ENCODE measurements at regions of chr1 and their contacts with region 1.

Region 1: GRCh38 chr1:237562242-237562823 is 328.4 kb downstream of the ZP4 start:
- DNase-seq: peak; percentile 39
- H3K4me3 ChIP-seq: no peak overlapping the region
- H3K27ac ChIP-seq: no peak overlapping the region
- H3K4me1 ChIP-seq: no peaks in the 10 kb centered on the region
- H3K27me3 ChIP-seq: no peaks in the 10 kb centered on the region
- CTCF ChIP-seq: peak; percentile 76
- EP300 ChIP-seq: no peak
- RAD21 ChIP-seq: peak; percentile 73

Region 2: DNA sequence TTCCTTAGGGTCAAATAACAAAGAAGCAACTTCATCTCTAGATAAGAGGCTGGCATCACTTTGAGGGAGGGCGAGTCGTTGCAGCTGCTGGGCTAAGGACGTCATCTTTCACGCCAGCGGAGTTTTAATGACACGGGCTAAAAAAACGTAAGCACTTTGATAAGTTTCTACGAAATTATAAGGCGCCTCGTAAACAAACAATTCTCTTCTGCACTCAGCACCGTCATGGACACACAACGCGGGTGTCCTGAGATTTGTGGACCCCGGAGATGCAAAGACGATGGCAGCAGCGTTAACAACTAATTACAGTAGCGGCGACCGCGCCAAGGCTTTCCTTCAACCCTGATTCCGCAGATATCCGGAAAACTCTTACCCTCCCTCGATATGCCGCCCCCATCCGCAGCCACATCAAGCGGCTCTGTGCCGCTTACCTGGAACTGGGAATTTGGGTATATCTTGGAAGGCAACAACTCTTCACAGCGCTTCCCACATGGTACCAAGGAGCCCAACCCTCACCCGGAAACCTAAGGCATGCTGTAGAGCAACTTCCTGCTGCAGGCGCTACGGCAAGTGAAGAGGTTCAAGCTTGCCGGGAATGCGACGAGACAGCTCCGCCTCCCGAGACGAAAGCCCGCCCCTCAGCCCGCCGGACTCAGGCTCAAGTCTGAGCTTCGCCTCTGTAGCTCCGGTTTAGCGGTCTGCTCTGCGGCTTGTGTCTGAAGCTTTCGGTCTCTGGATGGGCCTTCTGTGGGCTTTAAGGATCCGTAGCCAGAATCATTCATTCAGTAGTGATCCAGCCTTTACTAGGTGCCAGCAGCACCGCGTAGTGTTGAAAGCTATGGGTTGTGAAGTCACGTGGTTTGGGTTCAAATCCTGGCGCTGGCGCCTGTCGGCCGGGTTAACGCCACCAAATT is 958.1 kb before region 1 on chr1 and contains the start of gene HEATR1:
- CTCF ChIA-PET with region 1: interaction called, 13 read pairs
- POLR2A ChIA-PET with region 1: no interaction called
- DNase-seq: peak; percentile 86
- H3K4me3 ChIP-seq: peak within 1 kb of the TSS; percentile 74 to 76
- H3K27ac ChIP-seq: peak within 1 kb of the TSS; percentile 52 to 85; a peak in 3 of 4 replicates
- H3K4me1 ChIP-seq: peaks cover 0 to 5% of the 10 kb centered on the region in 2 experiments; a peak in 2 of 4 replicates
- H3K27me3 ChIP-seq: no peaks in the 10 kb centered on the region
- CTCF ChIP-seq: no peak
- EP300 ChIP-seq: no peak; a peak in 1 of 4 replicates
- RAD21 ChIP-seq: no peak
- polyA plus RNA-seq, gene HEATR1: 10.6 and 15.2 TPM in 2 replicates

Region 3: GRCh38 chr1:236753516-236753915 is 808.8 kb before region 1 on chr1:
- CTCF ChIA-PET with region 1: interaction called, 14 read pairs
- POLR2A ChIA-PET with region 1: no interaction called
- DNase-seq: peak; percentile 58
- H3K4me3 ChIP-seq: no peak overlapping the region
- H3K27ac ChIP-seq: no peak overlapping the region
- H3K4me1 ChIP-seq: peaks cover 0 to 2% of the 10 kb centered on the region in 2 experiments; a peak in 1 of 4 replicates
- H3K27me3 ChIP-seq: no peaks in the 10 kb centered on the region
- CTCF ChIP-seq: peak; percentile 30
- EP300 ChIP-seq: no peak
- RAD21 ChIP-seq: peak; percentile 72

Region 4: GRCh38 chr1:237041795-237042525 is 520.4 kb before region 1 on chr1 and contains the start of gene RYR2:
- CTCF ChIA-PET with region 1: interaction called, 17 read pairs
- POLR2A ChIA-PET with region 1: interaction called, 3 read pairs
- DNase-seq: peak; percentile 88
- H3K4me3 ChIP-seq: peak within 1 kb of the TSS in 1 of 2 experiments; percentile 50; a peak in 3 of 4 replicates
- H3K27ac ChIP-seq: no peak within 1 kb of the TSS; a peak in 1 of 4 replicates
- H3K4me1 ChIP-seq: peaks cover 0 to 7% of the 10 kb centered on the region in 2 experiments; a peak in 2 of 4 replicates
- H3K27me3 ChIP-seq: no peaks in the 10 kb centered on the region
- CTCF ChIP-seq: no peak
- EP300 ChIP-seq: no peak
- RAD21 ChIP-seq: peak; percentile 68
- polyA plus RNA-seq, gene RYR2: under 0.01 and 0.03 TPM in 2 replicates

Region 5: DNA sequence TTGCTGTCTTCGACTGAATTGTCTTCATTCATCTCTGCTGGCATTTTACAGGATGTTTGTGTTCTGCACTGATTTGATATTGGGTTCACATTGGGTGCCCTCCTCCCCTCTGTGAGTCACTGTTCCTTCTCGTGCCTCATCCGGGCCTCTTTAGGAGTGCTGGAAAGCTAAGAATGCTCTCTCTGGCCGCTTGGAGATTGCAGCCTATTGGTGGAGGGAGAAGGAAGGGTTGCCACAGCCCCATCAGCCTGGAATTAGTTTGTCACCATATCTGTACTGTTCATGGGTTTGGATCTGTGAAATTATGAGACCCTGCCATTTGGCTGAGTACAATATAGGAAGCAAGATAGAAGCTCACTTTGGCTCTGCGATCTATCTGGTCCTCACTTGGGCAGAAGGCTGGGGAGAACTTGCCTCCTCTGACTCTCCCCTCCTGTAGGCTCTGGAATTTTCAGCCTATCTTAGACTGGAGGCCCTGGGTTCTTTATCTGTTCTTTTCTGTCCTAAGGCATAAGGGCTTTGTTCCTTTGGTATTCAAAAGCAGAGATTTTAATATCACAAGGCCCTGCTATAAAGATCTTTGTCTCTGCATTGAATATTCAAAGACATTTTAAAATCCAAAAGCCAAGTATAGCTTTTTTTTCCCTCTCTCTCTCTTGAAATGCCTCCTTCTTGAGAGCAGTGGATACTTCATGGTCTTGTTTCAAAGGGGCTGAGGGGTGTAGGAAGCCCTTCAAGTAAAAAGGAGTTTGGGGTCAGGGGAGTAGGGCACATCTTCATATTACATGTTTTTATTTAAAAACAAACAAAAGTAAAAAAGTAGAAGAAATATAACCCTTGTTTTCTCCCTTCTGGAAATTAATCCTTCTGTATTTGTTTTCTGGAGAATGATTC is 19.6 kb before region 1 on chr1:
- CTCF ChIA-PET with region 1: interaction called, 19 read pairs
- POLR2A ChIA-PET with region 1: no interaction called
- DNase-seq: no peak
- H3K4me3 ChIP-seq: no peak overlapping the region
- H3K27ac ChIP-seq: no peak overlapping the region
- H3K4me1 ChIP-seq: no peaks in the 10 kb centered on the region; a peak in 1 of 4 replicates
- H3K27me3 ChIP-seq: no peaks in the 10 kb centered on the region
- CTCF ChIP-seq: no peak
- EP300 ChIP-seq: no peak
- RAD21 ChIP-seq: no peak